CD4-positive, alpha-beta T cell (primary cell): ENCODE measurements at regions of chr9 and their contacts with region 1.

Region 1: GRCh38 chr9:19230356-19231125 is at the start of gene DENND4C:
- DNase-seq: peak; percentile 65 to 92 (median 80)
- ATAC-seq: peak; percentile 84
- H3K4me3 ChIP-seq: peak within 1 kb of the TSS; percentile 71
- H3K4me3 Mint-ChIP-seq: peak within 1 kb of the TSS; percentile 91
- H3K27ac ChIP-seq: peak within 1 kb of the TSS; percentile 58 to 65
- H3K27ac Mint-ChIP-seq: no peak within 1 kb of the TSS
- H3K4me1 ChIP-seq: peaks cover 16% of the 10 kb centered on the region
- H3K4me1 Mint-ChIP-seq: peaks cover 10% of the 10 kb centered on the region
- H3K27me3 ChIP-seq: no peaks in the 10 kb centered on the region
- H3K27me3 Mint-ChIP-seq: no peaks in the 10 kb centered on the region
- CTCF ChIP-seq: peak; percentile 13
- total RNA-seq, gene DENND4C: 32.5 to 34.1 TPM

Region 2: GRCh38 chr9:19102631-19103345 is 127.8 kb before region 1 on chr9 and contains the start of gene HAUS6:
- CTCF ChIA-PET with region 1: no interaction called
- POLR2A ChIA-PET with region 1: no interaction called
- intact Hi-C with region 1: loop called (anchors 1 to 5 kb)
- DNase-seq: peak; percentile 81 to 99 (median 92)
- ATAC-seq: peak; percentile 89
- H3K4me3 ChIP-seq: peak within 1 kb of the TSS; percentile 85
- H3K4me3 Mint-ChIP-seq: peak within 1 kb of the TSS; percentile 99
- H3K27ac ChIP-seq: peak within 1 kb of the TSS; percentile 81 to 85
- H3K27ac Mint-ChIP-seq: peak within 1 kb of the TSS; percentile 98
- H3K4me1 ChIP-seq: peaks cover 20% of the 10 kb centered on the region
- H3K4me1 Mint-ChIP-seq: peaks cover 31% of the 10 kb centered on the region
- H3K27me3 ChIP-seq: no peaks in the 10 kb centered on the region
- H3K27me3 Mint-ChIP-seq: no peaks in the 10 kb centered on the region
- CTCF ChIP-seq: peak; percentile 35
- total RNA-seq, gene HAUS6: 14.9 to 17.2 TPM

Region 3: GRCh38 chr9:19184144-19184917 is 46.2 kb before region 1 on chr9:
- CTCF ChIA-PET with region 1: no interaction called
- POLR2A ChIA-PET with region 1: interaction called, 12 read pairs
- intact Hi-C with region 1: loop called (anchors 2 to 5 kb)
- DNase-seq: peak; percentile 43 to 90 (median 71)
- ATAC-seq: peak; percentile 99
- H3K4me3 ChIP-seq: no peak overlapping the region
- H3K4me3 Mint-ChIP-seq: peak overlapping the region; percentile 44
- H3K27ac ChIP-seq: peak overlapping the region; percentile 32 to 60
- H3K27ac Mint-ChIP-seq: peak overlapping the region; percentile 92
- H3K4me1 ChIP-seq: peaks cover 26% of the 10 kb centered on the region
- H3K4me1 Mint-ChIP-seq: peaks cover 13% of the 10 kb centered on the region
- H3K27me3 ChIP-seq: no peaks in the 10 kb centered on the region
- H3K27me3 Mint-ChIP-seq: no peaks in the 10 kb centered on the region
- CTCF ChIP-seq: no peak

Region 4: DNA sequence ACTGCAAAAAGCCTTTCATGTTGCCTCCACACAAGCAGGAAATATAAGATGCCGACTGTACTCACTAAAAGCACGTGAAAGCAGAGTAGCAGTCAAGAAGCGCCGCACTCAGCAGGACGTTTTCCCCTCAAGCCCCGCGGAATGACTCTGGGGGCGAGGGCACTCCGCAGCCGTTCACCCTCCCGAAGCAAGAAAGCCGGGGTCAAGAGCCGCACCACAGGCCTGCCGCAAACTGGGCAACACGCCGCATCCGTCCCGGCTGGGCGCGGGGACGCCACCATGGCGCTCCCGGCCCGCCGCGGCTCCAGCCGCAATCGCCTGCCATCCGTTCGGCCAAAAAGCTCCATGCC is 149.1 kb after region 1 on chr9:
- CTCF ChIA-PET with region 1: no interaction called
- POLR2A ChIA-PET with region 1: interaction called, 14 read pairs
- intact Hi-C with region 1: loop called (anchors 2 to 5 kb)
- DNase-seq: peak in 8 of 14 experiments; percentile 23 to 73 (median 36)
- ATAC-seq: peak; percentile 49
- H3K4me3 ChIP-seq: peak overlapping the region; percentile 60
- H3K4me3 Mint-ChIP-seq: peak overlapping the region; percentile 90
- H3K27ac ChIP-seq: peak overlapping the region; percentile 88 to 90
- H3K27ac Mint-ChIP-seq: peak overlapping the region; percentile 94
- H3K4me1 ChIP-seq: peaks cover 23% of the 10 kb centered on the region
- H3K4me1 Mint-ChIP-seq: peaks cover 52% of the 10 kb centered on the region
- H3K27me3 ChIP-seq: no peaks in the 10 kb centered on the region
- H3K27me3 Mint-ChIP-seq: no peaks in the 10 kb centered on the region
- CTCF ChIP-seq: no peak

Region 5: DNA sequence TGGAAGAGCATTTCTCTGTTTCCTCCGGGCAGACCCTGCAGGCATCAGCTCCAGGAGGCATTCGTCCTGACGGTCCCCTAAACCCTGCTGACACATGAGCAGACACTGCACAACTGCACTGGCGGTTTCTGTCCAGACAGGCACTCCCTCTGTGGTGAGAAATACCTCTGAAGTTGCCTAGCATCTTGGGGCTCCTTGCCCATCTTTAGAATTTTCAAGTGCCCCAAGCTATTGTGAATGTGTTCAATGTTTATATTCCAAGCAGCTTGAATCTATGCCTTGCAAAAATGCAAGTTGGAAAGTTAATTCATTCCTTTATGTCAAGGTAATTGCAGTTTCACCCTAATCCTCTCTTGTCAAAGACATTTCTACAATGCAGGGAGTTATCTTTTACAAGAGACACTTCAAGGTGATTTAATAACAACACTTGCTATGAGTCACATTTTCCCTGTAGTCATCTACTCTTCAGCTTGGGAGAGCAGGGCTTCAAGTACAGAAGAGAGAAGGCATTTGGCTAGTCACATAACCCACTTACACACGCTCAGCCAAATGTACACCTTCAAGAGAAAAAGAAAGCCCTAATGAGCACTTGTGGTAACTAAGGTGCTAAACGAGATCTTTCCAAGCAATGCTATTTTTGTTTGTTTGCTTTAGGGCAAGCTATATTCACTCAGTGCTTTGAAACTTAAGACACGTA is 1089.2 kb after region 1 on chr9:
- CTCF ChIA-PET with region 1: no interaction called
- POLR2A ChIA-PET with region 1: no interaction called
- intact Hi-C with region 1: loop called in 1 of 2 experiments (anchors 10 kb)
- DNase-seq: peak in 6 of 14 experiments; percentile 7 to 40 (median 18)
- ATAC-seq: no peak
- H3K4me3 ChIP-seq: no peak overlapping the region
- H3K4me3 Mint-ChIP-seq: no peak overlapping the region
- H3K27ac ChIP-seq: no peak overlapping the region
- H3K27ac Mint-ChIP-seq: peak overlapping the region; percentile 89
- H3K4me1 ChIP-seq: peaks cover 88% of the 10 kb centered on the region
- H3K4me1 Mint-ChIP-seq: peaks cover 88% of the 10 kb centered on the region
- H3K27me3 ChIP-seq: no peaks in the 10 kb centered on the region
- H3K27me3 Mint-ChIP-seq: no peaks in the 10 kb centered on the region
- CTCF ChIP-seq: no peak